Activated T-helper 1 cell treated with anti-CD3 and anti-CD28 coated beads, Interleukin-12 subunit alpha, Interleukin-12 subunit beta, Interleukin-2, Interleukin-4 antibody, amounts not matched to agents 30 ng/mL and 10 ng/mL and 1 ng/mL, durations not matched to agents 14 hours and 24 hours and 36 hours (primary cell): ENCODE measurements at regions of chr19 and their contacts with region 1.

Region 1: GRCh38 chr19:48993175-48994034 is at the starts of genes GYS1 and RUVBL2:
- DNase-seq: peak; percentile 99
- H3K4me3 Mint-ChIP-seq: peak within 1 kb of the TSS; percentile 94
- H3K27ac Mint-ChIP-seq: peak within 1 kb of the TSS; percentile 96
- H3K4me1 Mint-ChIP-seq: peaks cover 38% of the 10 kb centered on the region
- H3K27me3 Mint-ChIP-seq: no peaks in the 10 kb centered on the region
- total RNA-seq, gene GYS1: 71.2 and 77.1 TPM in 2 replicates
- total RNA-seq, gene RUVBL2: 172 and 175 TPM in 2 replicates

Region 2: GRCh38 chr19:48363810-48364563 is 629.4 kb before region 1 on chr19 and contains the starts of genes SYNGR4 and TMEM143:
- intact Hi-C with region 1: loop called (anchors 2 kb)
- DNase-seq: peak; percentile 98
- H3K4me3 Mint-ChIP-seq: peak within 1 kb of the TSS; percentile 85
- H3K27ac Mint-ChIP-seq: peak within 1 kb of the TSS; percentile 87
- H3K4me1 Mint-ChIP-seq: peaks cover 6% of the 10 kb centered on the region
- H3K27me3 Mint-ChIP-seq: no peaks in the 10 kb centered on the region
- total RNA-seq, gene SYNGR4: 0.61 TPM in 1 of 2 replicates, not detected in the other
- total RNA-seq, gene TMEM143: 7.7 and 14.9 TPM in 2 replicates

Region 3: DNA sequence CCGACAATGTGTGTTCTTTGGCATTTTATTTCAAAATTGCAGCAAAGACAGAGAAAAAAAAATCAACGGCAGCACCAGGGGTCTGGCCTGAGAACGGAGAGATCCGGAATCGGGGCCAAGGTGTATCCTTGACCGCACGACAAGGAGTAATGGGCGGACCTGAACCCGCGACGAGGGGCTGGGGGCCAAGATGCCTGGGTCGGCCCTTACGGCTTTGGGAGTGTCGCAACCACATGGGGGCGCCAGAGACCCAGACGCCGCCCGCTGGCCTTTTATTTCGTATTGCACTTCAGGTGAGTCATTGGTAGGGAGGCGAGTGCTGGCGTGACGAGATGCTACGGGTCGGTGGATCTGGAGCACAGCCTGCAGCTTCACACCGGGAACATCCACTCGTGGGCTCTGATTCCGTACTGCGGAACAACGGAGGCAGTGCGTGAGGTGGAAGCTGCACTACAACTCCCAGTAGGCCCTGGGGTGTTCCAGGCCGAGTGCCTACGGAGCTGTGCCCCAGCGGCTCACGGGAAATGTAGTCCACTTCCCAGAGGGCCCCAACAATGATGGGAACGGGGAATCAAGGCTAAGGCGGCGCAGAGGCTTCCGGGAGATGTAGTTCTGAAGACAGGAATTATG is 198.2 kb before region 1 on chr19:
- intact Hi-C with region 1: loop called (anchors 1 kb)
- DNase-seq: peak; percentile 79
- H3K4me3 Mint-ChIP-seq: peak overlapping the region; percentile 89
- H3K27ac Mint-ChIP-seq: peak overlapping the region; percentile 87
- H3K4me1 Mint-ChIP-seq: peaks cover 7% of the 10 kb centered on the region
- H3K27me3 Mint-ChIP-seq: no peaks in the 10 kb centered on the region

Region 4: GRCh38 chr19:48872182-48872883 is 121.1 kb before region 1 on chr19 and contains the start of gene PPP1R15A:
- intact Hi-C with region 1: loop called (anchors 1 kb)
- DNase-seq: peak; percentile 99
- H3K4me3 Mint-ChIP-seq: peak within 1 kb of the TSS; percentile 97
- H3K27ac Mint-ChIP-seq: peak within 1 kb of the TSS; percentile 99
- H3K4me1 Mint-ChIP-seq: peaks cover 42% of the 10 kb centered on the region
- H3K27me3 Mint-ChIP-seq: peaks cover 4% of the 10 kb centered on the region
- total RNA-seq, gene PPP1R15A: 53.1 and 53.7 TPM in 2 replicates

Region 5: GRCh38 chr19:48965040-48965805 is 28.2 kb before region 1 on chr19 and contains the start of gene FTL:
- intact Hi-C with region 1: loop called (anchors 1 kb)
- DNase-seq: peak; percentile 91
- H3K4me3 Mint-ChIP-seq: peak within 1 kb of the TSS; percentile 95
- H3K27ac Mint-ChIP-seq: peak within 1 kb of the TSS; percentile 96
- H3K4me1 Mint-ChIP-seq: peaks cover 58% of the 10 kb centered on the region
- H3K27me3 Mint-ChIP-seq: no peaks in the 10 kb centered on the region
- total RNA-seq, gene FTL: 651 and 662 TPM in 2 replicates

Region 6: GRCh38 chr19:49073514-49074378 is 80.3 kb after region 1 on chr19:
- intact Hi-C with region 1: no loop called
- DNase-seq: no peak
- H3K4me3 Mint-ChIP-seq: peak overlapping the region; percentile 42
- H3K27ac Mint-ChIP-seq: no peak overlapping the region
- H3K4me1 Mint-ChIP-seq: peaks cover 10% of the 10 kb centered on the region
- H3K27me3 Mint-ChIP-seq: peaks cover 42% of the 10 kb centered on the region

Region 7: GRCh38 chr19:49118565-49119410 is 125.4 kb after region 1 on chr19 and contains the start of gene C19orf73:
- intact Hi-C with region 1: loop called (anchors 2 kb)
- DNase-seq: peak; percentile 94
- H3K4me3 Mint-ChIP-seq: peak within 1 kb of the TSS; percentile 86
- H3K27ac Mint-ChIP-seq: peak within 1 kb of the TSS; percentile 85
- H3K4me1 Mint-ChIP-seq: peaks cover 34% of the 10 kb centered on the region
- H3K27me3 Mint-ChIP-seq: peaks cover 17% of the 10 kb centered on the region
- total RNA-seq, gene C19orf73: 2.6 and 2.9 TPM in 2 replicates

Region 8: DNA sequence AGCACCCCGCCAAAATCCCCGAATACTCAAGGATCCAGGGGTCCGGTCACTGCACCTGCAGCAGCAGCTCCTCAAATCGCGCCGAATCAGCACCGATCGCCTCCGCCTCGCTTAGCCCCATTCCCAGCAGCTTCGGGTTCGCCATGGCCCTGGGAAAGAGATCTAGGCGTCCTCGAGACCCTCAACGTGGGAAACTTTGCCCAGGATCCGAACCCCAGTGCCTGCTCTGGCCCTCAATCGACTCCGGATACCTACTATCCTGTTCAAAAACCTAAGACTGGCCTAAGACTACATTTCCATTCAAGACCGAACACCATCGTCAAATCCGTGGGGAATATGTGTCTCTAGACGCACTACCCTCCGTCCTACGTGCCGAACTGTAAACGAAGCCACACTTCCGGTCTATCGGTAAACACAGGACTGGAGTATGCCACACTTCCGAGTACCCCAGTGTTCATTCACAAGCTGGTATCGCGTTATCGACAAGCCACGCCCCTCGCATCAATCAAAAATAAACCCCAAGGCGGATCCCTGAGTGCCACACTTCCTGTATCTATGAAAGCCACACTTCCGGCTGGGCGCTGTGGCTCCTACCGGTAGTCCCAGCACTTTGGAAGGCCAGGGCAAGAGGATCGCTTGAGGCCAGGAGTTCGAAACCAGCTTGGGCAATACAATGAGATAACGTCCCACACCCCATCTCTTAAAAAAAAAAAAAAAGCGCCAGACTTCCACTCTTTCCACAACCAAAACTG is 458.2 kb after region 1 on chr19 and contains the start of gene PIH1D1:
- intact Hi-C with region 1: loop called (anchors 1 kb)
- DNase-seq: peak; percentile 94
- H3K4me3 Mint-ChIP-seq: peak within 1 kb of the TSS; percentile 96
- H3K27ac Mint-ChIP-seq: peak within 1 kb of the TSS; percentile 99
- H3K4me1 Mint-ChIP-seq: peaks cover 55% of the 10 kb centered on the region
- H3K27me3 Mint-ChIP-seq: no peaks in the 10 kb centered on the region
- total RNA-seq, gene PIH1D1: 124 and 126 TPM in 2 replicates